AG04449 (cell line): ENCODE measurements at regions of chr15 and their contacts with region 1.

Region 1: DNA sequence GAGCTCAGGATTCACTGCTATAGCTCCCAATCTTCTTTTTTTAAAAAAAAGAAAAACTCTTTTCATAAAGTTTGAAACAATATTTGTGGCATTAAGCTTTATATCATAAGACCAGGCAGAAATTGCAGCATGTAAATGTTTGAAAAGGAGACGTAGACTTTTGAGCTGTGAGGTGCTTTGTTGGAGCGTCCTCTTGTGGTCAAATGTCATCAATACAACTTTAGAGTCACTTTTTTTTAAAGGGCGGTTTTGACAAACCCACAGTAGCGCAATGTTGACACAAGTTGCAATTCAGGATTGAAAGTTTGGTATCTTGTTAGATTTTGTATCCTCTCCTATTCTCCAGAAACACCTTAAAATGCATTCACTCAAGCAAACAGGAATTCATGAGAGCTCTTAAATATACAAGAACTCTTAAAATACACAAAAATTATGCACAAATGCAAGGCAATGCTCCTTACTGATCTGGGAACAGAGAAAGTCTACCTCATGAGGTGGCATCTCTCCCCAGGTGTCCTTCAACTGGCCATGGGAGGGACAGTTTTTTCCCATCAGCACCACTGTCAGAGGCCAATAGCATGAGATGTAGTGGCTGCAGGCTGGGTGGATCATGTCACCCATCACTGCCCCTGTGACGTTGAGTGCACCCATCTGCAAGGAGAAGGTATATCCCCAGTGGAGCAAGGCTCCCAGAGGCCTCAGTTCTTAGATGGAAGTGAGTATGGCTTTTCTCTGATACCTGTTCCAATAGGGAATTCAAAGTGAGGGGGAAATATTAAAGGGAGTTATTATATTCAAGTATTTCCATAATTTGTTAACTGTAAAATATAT is 70.7 kb downstream of the ANXA2 start:
- DNase-seq: no peak
- H3K4me3 ChIP-seq: no peak overlapping the region
- CTCF ChIP-seq: peak; percentile 69

Region 2: GRCh38 chr15:59917504-59918157 is 409.4 kb before region 1 on chr15:
- CTCF ChIA-PET with region 1: interaction called, 23 read pairs
- POLR2A ChIA-PET with region 1: no interaction called
- DNase-seq: no peak
- H3K4me3 ChIP-seq: no peak overlapping the region
- CTCF ChIP-seq: peak; percentile 60

Region 3: GRCh38 chr15:60315878-60316277 is 11.2 kb before region 1 on chr15:
- CTCF ChIA-PET with region 1: interaction called, 38 read pairs
- POLR2A ChIA-PET with region 1: no interaction called
- DNase-seq: no peak
- H3K4me3 ChIP-seq: no peak overlapping the region
- CTCF ChIP-seq: no peak

Region 4: DNA sequence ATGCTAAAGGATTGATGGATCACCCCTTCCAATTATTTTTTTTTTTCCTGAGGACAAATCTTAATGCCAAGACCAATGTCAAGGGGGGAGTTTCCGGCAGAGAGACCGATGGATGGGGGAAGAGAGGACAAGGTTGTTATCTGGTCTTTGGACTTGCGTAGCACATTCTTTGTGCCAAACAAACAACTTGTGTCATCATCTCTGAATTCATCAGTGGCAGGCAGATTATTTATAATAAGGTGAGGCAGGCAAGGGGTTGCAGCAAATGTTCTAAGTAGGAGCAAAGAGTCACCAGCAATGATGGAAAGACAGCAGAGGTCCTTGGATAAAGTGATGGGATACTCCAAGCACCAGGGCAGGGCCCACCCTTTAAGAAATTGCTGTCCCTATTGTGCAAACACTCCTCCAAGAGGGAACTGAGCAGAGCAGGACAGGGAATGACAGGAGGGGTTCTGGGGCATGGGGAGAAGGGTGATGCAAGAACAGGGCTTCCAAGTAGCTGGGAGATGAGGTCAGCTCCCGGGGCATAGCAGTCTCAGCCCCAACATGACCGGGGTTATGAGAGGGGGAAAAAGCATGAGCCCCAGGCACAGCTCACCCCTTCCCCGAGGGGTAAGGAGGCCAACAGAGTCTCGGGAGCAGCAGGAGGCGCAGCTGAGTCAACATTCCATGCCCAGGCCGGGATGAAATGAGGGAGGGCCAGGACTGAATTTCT is 13.3 kb after region 1 on chr15:
- CTCF ChIA-PET with region 1: interaction called, 30 read pairs
- POLR2A ChIA-PET with region 1: no interaction called
- DNase-seq: no peak
- H3K4me3 ChIP-seq: no peak overlapping the region
- CTCF ChIP-seq: peak; percentile 14

Region 5: GRCh38 chr15:60469893-60470641 is 143.0 kb after region 1 on chr15:
- CTCF ChIA-PET with region 1: no interaction called
- POLR2A ChIA-PET with region 1: no interaction called
- DNase-seq: no peak
- H3K4me3 ChIP-seq: no peak overlapping the region
- CTCF ChIP-seq: no peak

Region 6: GRCh38 chr15:60685346-60685937 is 358.4 kb after region 1 on chr15:
- CTCF ChIA-PET with region 1: no interaction called
- POLR2A ChIA-PET with region 1: no interaction called
- DNase-seq: no peak
- H3K4me3 ChIP-seq: no peak overlapping the region
- CTCF ChIP-seq: no peak

Region 7: DNA sequence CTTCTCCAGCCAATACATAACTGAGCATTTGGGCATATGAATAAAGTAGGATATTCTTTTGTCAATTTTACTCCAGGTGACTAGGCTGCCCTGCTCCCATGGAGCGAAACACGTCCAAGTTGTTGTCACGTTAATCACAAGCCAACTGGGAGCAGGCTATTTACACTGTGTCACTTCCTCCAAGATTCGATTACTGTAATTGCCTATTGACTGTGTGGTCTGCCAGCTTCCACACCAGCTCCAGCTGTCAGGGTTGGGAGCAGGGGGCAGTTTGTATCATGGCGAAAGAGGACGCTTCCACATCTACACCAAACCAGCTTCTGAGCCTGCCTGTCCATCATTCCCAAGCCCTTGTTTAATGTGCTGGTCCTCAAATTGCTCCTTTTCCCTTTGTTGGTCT is 991.3 kb after region 1 on chr15:
- CTCF ChIA-PET with region 1: no interaction called
- POLR2A ChIA-PET with region 1: no interaction called
- DNase-seq: no peak
- H3K4me3 ChIP-seq: no peak overlapping the region
- CTCF ChIP-seq: no peak